ENCODE measurements at regions of chr7 and their contacts with region 1.

Region 1: GRCh38 chr7:23712368-23713284 is 2.6 kb downstream of the STK31 start:
- DNase-seq: peak; percentile 74
- ATAC-seq: peak; percentile 72
- H3K4me3 ChIP-seq: no peak overlapping the region
- H3K27ac ChIP-seq: peak overlapping the region; percentile 49
- H3K4me1 ChIP-seq: peaks cover 22% of the 10 kb centered on the region
- H3K27me3 ChIP-seq: no peaks in the 10 kb centered on the region
- CTCF ChIP-seq: peak; percentile 63; the same call in 1 of the 2 replicates

Region 2: GRCh38 chr7:23539494-23539907 is 173.1 kb before region 1 on chr7:
- CTCF ChIA-PET with region 1: interaction called, 10 read pairs
- POLR2A ChIA-PET with region 1: no interaction called
- in situ Hi-C with region 1: no loop called
- intact Hi-C with region 1: no loop called
- DNase-seq: no peak
- ATAC-seq: no peak
- H3K4me3 ChIP-seq: no peak overlapping the region
- H3K27ac ChIP-seq: no peak overlapping the region
- H3K4me1 ChIP-seq: no peaks in the 10 kb centered on the region
- H3K27me3 ChIP-seq: no peaks in the 10 kb centered on the region
- CTCF ChIP-seq: no peak

Region 3: GRCh38 chr7:23546897-23547572 is 165.6 kb before region 1 on chr7:
- CTCF ChIA-PET with region 1: interaction called, 7 read pairs
- POLR2A ChIA-PET with region 1: no interaction called
- in situ Hi-C with region 1: no loop called
- intact Hi-C with region 1: loop called (anchors 1 kb)
- DNase-seq: peak; percentile 84
- ATAC-seq: peak; percentile 91
- H3K4me3 ChIP-seq: no peak overlapping the region
- H3K27ac ChIP-seq: no peak overlapping the region
- H3K4me1 ChIP-seq: no peaks in the 10 kb centered on the region
- H3K27me3 ChIP-seq: no peaks in the 10 kb centered on the region
- CTCF ChIP-seq: peak; percentile 99

Region 4: DNA sequence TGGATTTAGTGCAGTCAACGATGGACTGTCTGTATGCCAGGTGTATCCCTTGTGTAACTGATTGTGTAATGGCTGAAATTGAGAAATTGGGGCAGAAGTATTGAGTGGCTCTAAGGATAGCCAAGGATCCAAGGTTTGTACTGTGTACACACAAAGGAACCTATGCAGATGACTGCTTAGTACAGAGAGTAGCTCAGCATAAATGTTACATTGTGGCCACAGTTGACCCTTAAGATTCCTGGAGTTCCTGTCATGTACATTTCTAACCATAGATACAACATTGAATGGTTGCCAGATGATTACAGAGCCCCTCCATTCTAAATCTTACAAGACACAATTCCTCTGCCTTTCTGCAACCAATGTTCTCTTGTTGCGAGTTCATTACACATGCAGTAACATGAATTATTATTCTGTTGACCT is 90.1 kb before region 1 on chr7:
- CTCF ChIA-PET with region 1: no interaction called
- POLR2A ChIA-PET with region 1: no interaction called
- in situ Hi-C with region 1: no loop called
- intact Hi-C with region 1: no loop called
- DNase-seq: no peak
- ATAC-seq: peak; percentile 51; the same call in 1 of the 2 replicates
- H3K4me3 ChIP-seq: no peak overlapping the region
- H3K27ac ChIP-seq: no peak overlapping the region
- H3K4me1 ChIP-seq: no peaks in the 10 kb centered on the region
- H3K27me3 ChIP-seq: no peaks in the 10 kb centered on the region
- CTCF ChIP-seq: no peak

Region 5: DNA sequence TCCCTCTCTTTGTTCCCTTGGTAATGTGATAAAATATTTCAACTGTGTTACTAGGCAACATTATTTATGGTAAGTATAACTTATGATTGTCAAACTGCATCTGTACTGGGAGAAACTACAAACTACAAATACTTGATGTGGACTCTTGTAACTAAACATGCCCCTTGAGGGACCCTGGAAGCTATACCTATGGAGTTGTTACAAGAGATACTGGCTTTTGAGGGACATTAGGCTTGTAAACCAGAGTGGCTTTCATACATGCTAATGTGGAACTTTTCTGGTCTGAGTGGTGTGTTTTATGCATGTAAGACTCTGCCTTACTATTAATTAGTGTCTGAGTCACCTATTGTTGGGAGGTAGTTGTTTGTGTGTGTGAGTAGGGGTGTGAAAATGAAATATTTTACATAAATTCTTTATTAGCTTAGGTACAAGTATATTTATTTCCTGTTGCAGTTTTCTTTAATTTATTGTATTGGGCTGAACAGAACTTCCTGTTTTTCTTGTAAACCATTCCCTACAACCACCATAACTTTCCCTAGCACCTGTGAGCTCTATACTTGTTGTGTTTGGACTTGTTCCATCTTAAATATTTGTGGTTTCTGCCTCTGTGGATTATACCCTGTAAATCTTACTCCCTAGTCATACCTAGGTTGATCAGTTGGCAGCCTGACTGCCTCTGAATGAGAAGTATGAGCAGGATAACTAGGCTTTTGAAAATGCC is 47.2 kb after region 1 on chr7:
- CTCF ChIA-PET with region 1: no interaction called
- POLR2A ChIA-PET with region 1: interaction called, 3 read pairs
- in situ Hi-C with region 1: no loop called
- intact Hi-C with region 1: loop called (anchors 2 kb)
- DNase-seq: peak; percentile 66
- ATAC-seq: peak; percentile 100
- H3K4me3 ChIP-seq: no peak overlapping the region
- H3K27ac ChIP-seq: peak overlapping the region; percentile 86
- H3K4me1 ChIP-seq: peaks cover 18% of the 10 kb centered on the region
- H3K27me3 ChIP-seq: no peaks in the 10 kb centered on the region
- CTCF ChIP-seq: no peak